ENCODE measurements at regions of chr17 and their contacts with region 1.

Region 1: GRCh38 chr17:39450847-39451581 is at the start of gene MED1:
- DNase-seq: peak; percentile 97
- ATAC-seq: peak; percentile 98
- H3K4me3 ChIP-seq: peak within 1 kb of the TSS; percentile 82 to 95 (median 87)
- H3K4me3 Mint-ChIP-seq: peak within 1 kb of the TSS; percentile 92
- H3K27ac ChIP-seq: peak within 1 kb of the TSS; percentile 81 to 82
- H3K27ac Mint-ChIP-seq: peak within 1 kb of the TSS; percentile 97
- H3K4me1 ChIP-seq: peaks cover 13 to 17% of the 10 kb centered on the region in 2 donors
- H3K4me1 Mint-ChIP-seq: peaks cover 22% of the 10 kb centered on the region
- H3K27me3 ChIP-seq: no peaks in the 10 kb centered on the region
- H3K27me3 Mint-ChIP-seq: no peaks in the 10 kb centered on the region
- CTCF ChIP-seq: no peak
- total RNA-seq, gene MED1: 56.9 and 59.1 TPM in 2 replicates

Region 2: GRCh38 chr17:39461113-39461925 is 10.3 kb after region 1 on chr17 and contains the start of gene CDK12:
- CTCF ChIA-PET with region 1: interaction called, 13 read pairs
- POLR2A ChIA-PET with region 1: interaction called, 90 read pairs
- intact Hi-C with region 1: loop called (anchors 1 kb)
- DNase-seq: peak; percentile 99
- ATAC-seq: peak; percentile 88
- H3K4me3 ChIP-seq: peak within 1 kb of the TSS; percentile 82 to 98 (median 86)
- H3K4me3 Mint-ChIP-seq: peak within 1 kb of the TSS; percentile 93
- H3K27ac ChIP-seq: peak within 1 kb of the TSS; percentile 94 to 97
- H3K27ac Mint-ChIP-seq: peak within 1 kb of the TSS; percentile 96
- H3K4me1 ChIP-seq: peaks cover 20 to 32% of the 10 kb centered on the region in 2 donors
- H3K4me1 Mint-ChIP-seq: peaks cover 39% of the 10 kb centered on the region
- H3K27me3 ChIP-seq: no peaks in the 10 kb centered on the region
- H3K27me3 Mint-ChIP-seq: no peaks in the 10 kb centered on the region
- CTCF ChIP-seq: no peak
- total RNA-seq, gene CDK12: 117 and 134 TPM in 2 replicates

Region 3: DNA sequence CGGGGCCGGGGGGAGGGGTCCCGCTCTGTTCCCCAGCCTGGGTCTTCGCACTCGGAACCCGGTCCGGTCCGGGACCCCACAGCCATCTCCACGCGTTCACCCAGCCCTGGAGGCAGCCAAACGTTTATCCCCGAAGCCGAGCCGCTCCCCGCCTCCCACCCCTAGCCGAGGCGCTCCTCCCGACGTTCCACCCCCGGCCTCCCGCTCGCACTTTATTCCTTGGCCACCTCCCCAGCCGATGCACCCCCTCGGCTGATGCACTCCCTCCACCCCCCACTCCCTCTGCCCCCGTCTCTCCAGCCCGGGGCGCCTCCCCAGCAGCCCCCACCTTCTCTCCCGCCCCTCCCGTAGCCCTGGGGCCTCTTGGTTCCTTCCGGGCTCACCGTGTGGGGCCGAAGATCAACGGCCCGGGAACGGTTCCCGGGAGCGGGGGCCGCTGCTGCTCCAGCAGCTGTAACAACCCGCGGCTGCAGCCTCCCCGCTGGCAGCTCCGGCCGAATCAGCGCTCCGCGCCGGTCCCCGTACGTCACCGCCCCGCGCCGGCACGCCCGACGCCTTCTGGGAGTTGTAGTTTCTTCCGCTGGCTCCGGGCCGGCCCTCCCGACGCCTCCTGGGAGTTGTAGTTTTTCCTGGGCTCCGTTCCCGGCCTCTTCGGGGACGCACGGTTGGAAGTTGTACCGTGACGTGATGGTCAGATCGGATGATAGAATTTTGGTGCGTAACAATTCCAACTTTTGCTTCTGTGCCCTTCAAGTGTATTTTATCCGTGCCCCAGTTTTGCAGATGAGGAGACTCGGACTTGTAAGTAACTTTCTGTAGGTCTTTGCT is 476.3 kb after region 1 on chr17 and contains the starts of genes LRRC3C and ORMDL3:
- CTCF ChIA-PET with region 1: no interaction called
- POLR2A ChIA-PET with region 1: no interaction called
- intact Hi-C with region 1: loop called (anchors 5 kb)
- DNase-seq: peak; percentile 93
- ATAC-seq: peak; percentile 96
- H3K4me3 ChIP-seq: peak within 1 kb of the TSS; percentile 66 to 93 (median 79)
- H3K4me3 Mint-ChIP-seq: peak within 1 kb of the TSS; percentile 92
- H3K27ac ChIP-seq: peak within 1 kb of the TSS; percentile 46 to 73
- H3K27ac Mint-ChIP-seq: peak within 1 kb of the TSS; percentile 87
- H3K4me1 ChIP-seq: peaks cover 33 to 34% of the 10 kb centered on the region in 2 donors
- H3K4me1 Mint-ChIP-seq: peaks cover 36% of the 10 kb centered on the region
- H3K27me3 ChIP-seq: no peaks in the 10 kb centered on the region
- H3K27me3 Mint-ChIP-seq: no peaks in the 10 kb centered on the region
- CTCF ChIP-seq: no peak
- total RNA-seq, gene LRRC3C: not detected in 2 replicates
- total RNA-seq, gene ORMDL3: 43.4 and 51.8 TPM in 2 replicates